ENCODE measurements at regions of chr2 and their contacts with region 1.

Region 1: GRCh38 chr2:86123328-86123925 is 17.4 kb downstream of the PTCD3 start:
- DNase-seq: no peak
- H3K4me3 ChIP-seq: no peak overlapping the region
- H3K27ac ChIP-seq: no peak overlapping the region
- H3K4me1 ChIP-seq: no peaks in the 10 kb centered on the region
- H3K27me3 ChIP-seq: no peaks in the 10 kb centered on the region
- CTCF ChIP-seq: no peak

Region 2: DNA sequence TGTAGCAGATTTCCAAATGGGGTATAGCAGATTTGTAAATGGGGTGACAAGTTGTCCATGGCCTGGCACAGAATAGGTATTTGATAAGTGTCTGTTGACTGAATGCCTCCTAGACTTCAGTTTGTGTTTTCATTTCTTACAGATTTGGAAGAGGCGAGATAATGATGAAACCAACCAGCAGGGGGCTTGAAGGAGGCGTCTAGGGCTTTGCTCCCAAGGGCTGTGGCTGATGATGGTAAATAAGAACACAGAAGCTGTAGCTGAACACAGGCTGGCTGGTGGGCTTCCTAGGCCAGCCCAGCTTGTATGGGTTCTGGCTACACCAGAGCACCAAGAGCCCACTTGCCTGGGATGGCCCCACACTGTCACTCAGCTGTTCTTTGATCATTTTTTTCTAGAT is 474.8 kb before region 1 on chr2:
- CTCF ChIA-PET with region 1: no interaction called
- POLR2A ChIA-PET with region 1: no interaction called
- intact Hi-C with region 1: loop called (anchors 10 kb)
- DNase-seq: peak; percentile 61
- H3K4me3 ChIP-seq: no peak overlapping the region
- H3K27ac ChIP-seq: no peak overlapping the region
- H3K4me1 ChIP-seq: no peaks in the 10 kb centered on the region
- H3K27me3 ChIP-seq: no peaks in the 10 kb centered on the region
- CTCF ChIP-seq: peak; percentile 46

Region 3: GRCh38 chr2:86160156-86160952 is 36.9 kb after region 1 on chr2:
- CTCF ChIA-PET with region 1: no interaction called
- POLR2A ChIA-PET with region 1: no interaction called
- intact Hi-C with region 1: loop called (anchors 5 kb)
- DNase-seq: no peak
- H3K4me3 ChIP-seq: no peak overlapping the region
- H3K27ac ChIP-seq: no peak overlapping the region
- H3K4me1 ChIP-seq: no peaks in the 10 kb centered on the region
- H3K27me3 ChIP-seq: no peaks in the 10 kb centered on the region
- CTCF ChIP-seq: no peak

Measured in A673 (cell line).